ENCODE measurements at regions of chr18 and their contacts with region 1.

Region 1: DNA sequence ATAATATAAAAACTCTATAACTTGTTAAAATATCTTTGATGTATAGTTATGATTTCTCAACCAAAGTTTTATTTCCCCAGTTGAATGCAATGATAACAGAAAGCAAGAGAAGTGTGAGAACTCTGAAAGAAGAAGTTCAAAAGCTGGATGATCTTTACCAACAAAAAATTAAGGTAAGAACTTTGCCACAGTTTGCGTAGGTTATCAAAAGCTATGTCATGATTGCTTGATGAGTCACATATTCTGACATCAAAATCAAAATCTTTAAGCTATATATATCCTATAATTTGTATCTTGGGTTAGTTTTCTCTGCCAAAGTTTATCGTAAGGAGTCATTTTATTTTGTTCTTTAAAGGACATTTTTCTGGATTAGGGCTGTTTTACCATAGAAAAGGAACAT is 35.0 kb downstream of the NDC80 start:
- DNase-seq: no peak
- ATAC-seq: peak; percentile 31
- H3K4me3 Mint-ChIP-seq: peak overlapping the region; percentile 37
- H3K27ac Mint-ChIP-seq: peak overlapping the region; percentile 87
- H3K4me1 Mint-ChIP-seq: peaks cover 45% of the 10 kb centered on the region
- H3K27me3 Mint-ChIP-seq: no peaks in the 10 kb centered on the region
- CTCF ChIP-seq: no peak

Region 2: DNA sequence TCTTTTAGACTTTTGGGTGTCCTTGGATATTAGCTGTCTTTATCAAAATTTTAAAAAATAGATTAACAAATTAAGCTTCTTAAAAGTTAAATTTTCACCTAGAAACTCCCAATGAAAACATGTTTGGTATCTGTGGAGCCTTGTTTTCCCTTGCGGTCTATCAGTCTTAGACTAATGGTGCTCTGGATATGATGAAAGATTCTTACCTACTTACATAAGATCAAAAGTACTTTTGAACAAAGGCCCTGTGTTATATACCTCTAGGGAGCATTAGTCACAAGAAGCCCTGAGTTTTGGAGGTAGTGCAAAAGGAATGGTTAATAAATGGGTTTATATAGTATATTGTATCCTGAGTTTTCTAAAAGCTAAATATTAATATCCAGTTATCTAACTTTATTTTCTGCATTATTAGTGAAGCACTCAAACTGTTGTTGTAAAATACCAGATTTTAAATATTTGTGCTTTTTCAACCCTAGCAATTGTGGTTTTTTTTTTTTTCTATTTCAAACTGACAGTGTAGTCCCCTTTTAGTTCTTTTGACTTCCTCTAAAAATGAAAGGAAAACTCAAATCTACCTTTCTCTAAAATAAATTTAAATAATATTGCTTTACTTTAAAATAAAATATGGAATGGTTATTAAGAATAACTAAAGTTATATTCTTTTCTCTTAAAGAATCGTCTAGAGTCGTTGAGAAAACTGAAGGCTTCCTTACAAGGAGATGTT is 16.8 kb before region 1 on chr18:
- CTCF ChIA-PET with region 1: interaction called, 14 read pairs
- POLR2A ChIA-PET with region 1: interaction called, 3 read pairs
- intact Hi-C with region 1: no loop called
- DNase-seq: no peak
- ATAC-seq: peak; percentile 81
- H3K4me3 Mint-ChIP-seq: peak overlapping the region; percentile 53
- H3K27ac Mint-ChIP-seq: peak overlapping the region; percentile 94
- H3K4me1 Mint-ChIP-seq: peaks cover 56% of the 10 kb centered on the region
- H3K27me3 Mint-ChIP-seq: no peaks in the 10 kb centered on the region
- CTCF ChIP-seq: no peak

Region 3: GRCh38 chr18:2641638-2642037 is 35.3 kb after region 1 on chr18:
- CTCF ChIA-PET with region 1: interaction called, 3 read pairs
- POLR2A ChIA-PET with region 1: interaction called, 6 read pairs
- intact Hi-C with region 1: loop called (anchors 5 kb)
- DNase-seq: no peak
- ATAC-seq: peak; percentile 71
- H3K4me3 Mint-ChIP-seq: peak overlapping the region; percentile 51
- H3K27ac Mint-ChIP-seq: peak overlapping the region; percentile 75
- H3K4me1 Mint-ChIP-seq: peaks cover 50% of the 10 kb centered on the region
- H3K27me3 Mint-ChIP-seq: no peaks in the 10 kb centered on the region
- CTCF ChIP-seq: no peak

Measured in activated CD8-positive, alpha-beta T cell treated with anti-CD3 and anti-CD28 coated beads for 36 hours (primary cell).